Posterior cingulate gyrus (tissue), 11 donors: ENCODE measurements at regions of chr17 and their contacts with region 1.

Region 1: DNA sequence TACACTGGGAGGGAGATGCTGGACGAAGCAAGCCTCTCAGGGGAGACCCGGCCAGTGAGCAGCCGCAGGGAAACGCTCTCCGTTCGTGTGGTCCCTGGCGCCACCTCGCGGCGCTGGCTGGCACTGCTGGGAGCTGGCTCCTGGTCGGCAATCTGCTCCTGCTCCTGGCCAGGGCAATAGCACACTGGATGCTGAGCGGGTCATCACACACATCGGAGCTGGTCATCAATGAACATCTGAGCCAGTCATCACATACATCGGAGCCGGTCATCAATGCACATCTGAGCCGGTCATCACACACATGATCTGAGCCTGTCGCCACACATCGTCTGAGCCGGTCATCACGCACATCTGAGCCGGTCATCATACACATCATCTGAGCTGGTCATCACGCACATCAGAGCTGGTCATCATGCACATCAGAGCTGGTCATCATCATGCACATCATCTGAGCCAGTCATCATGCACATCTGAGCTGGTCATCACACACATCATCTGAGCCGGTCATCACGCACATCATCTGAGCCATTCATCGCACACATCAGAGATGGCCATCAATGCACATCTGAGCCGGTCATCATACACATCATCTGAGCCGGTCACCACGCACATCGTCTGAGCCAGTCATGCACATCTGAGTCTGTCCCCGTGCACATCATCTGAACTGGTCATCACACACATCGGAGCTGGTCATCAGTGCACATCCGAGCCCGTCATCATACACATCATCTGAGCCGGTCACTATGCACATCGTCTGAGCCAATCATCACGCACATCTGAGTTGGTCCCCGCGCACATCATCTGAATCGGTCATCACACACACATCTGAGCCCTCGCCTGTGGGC is 217.3 kb downstream of the RBFOX3 start:
- DNase-seq: peak; percentile 66 to 98 (median 88)

Region 2: DNA sequence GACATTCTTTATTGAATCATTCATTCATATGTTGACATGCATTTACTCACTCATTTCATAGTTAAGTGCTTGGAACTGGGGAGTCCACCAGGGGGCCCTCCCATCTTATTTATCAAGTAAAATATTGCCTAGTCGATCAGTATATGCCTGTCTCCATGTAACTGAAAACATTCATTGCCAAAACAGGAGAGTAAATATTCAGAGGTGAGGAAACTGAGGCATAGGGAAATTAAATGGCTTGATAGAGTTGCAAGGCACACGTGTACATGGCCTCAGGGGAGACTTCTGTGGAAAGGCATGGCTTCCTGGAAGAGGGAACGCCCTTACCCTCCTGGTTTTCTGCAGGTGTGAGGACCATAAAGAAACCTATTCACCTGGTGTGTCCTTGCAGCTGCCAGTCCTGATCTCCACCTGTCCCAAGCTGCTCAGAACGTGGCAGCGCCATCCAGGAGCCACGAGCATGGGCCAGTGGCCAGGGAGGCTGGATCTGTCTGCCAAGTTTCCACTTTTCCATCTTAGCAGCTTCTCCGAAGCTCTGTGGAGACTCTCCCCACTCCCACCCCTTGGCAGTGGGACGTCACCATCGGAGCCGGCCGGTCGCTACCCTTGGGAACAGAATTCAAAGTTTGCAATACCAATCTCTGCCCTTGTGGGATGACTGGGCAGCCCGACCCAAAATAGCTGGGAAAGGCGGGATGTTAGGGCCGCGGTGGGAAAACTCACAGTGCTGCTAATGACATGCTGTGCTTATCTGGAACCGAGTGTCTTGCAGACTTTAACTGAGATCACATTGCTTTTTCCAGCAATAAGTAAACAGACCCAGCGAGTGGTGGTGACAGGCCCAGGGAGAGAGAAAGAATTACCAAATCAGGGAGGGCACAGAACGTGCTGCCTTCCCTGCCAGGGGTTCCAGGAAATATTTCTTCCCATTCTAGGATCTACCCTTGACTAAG is 373.7 kb before region 1 on chr17:
- intact Hi-C with region 1: loop called (anchors 5 kb)
- DNase-seq: peak in 5 of 10 donors; percentile 35 to 87 (median 56)

Region 3: DNA sequence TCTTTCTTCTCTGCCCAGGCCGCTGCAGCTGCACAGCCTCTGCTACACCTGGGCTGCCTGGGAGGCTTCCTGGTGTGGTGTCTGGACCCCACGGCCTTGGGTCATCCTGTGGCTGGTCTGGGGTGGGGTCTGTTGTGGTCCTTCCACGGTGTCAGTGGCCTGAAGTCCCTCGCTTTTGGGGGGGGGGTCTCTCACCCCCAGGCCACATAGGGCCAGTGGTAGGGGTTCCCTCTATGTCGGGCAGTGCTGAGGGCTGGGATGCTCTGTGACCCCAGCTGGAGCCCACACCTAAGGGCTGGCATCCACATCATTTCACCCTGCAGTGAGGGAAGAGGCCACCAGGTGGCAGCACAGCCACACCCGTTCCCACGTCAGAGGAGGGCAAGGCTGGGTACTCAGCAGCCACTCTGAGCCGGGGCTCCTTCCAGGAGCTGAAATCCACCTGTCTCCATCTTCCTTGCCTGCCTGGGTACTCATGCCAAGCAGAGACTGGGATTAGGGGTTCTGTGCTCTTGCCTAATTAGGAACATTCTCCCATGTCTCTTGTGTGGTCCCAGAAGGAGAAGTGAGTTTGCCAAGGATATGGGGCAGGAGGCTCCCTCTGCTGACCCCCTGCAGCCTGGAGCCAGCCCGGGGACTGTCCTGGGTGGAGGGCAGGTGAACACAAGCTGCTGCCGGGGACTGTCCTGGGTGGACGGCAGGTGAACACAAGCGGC is 306.0 kb before region 1 on chr17:
- intact Hi-C with region 1: loop called (anchors 1 kb)
- DNase-seq: peak; percentile 58 to 96 (median 80)

Region 4: GRCh38 chr17:79188048-79188447 is 205.5 kb before region 1 on chr17:
- intact Hi-C with region 1: loop called (anchors 1 kb)
- DNase-seq: peak in 9 of 10 donors; percentile 28 to 93 (median 57)

Region 5: DNA sequence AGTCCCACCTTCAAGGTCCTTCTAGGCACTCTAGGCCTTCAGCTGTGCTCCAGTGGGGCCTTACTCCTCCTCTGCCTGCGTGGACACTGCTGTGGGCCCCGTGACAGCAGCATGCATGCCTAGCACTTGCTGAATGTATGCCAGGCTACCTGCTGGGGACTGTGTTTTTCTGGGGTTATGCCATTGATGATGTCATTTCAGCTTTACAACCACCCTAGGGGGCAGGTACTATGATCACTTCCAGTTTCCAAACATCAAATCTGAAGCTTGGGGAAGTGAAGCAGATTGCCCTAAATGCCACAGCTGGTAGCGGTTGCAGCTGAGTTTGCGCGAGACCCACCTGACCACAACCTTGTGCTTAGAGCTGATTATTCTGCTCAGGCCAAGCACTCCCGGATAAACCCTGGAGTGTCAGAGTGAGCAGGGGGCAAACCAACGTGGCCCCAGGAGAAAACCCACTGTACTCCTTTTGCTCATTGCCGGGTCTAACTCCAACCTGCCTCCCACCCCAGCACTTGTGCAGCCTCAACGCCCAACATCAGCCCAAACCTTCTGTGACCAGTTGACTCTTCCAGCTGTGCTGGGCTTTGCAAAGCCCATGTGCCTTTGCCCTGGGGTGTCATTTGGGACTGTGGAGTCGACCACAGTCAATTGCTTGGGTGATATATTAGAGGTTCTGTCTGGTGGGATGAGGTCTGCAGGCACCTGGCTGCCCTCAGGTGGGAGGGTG is 150.5 kb before region 1 on chr17:
- intact Hi-C with region 1: no loop called
- DNase-seq: no peak

Region 6: DNA sequence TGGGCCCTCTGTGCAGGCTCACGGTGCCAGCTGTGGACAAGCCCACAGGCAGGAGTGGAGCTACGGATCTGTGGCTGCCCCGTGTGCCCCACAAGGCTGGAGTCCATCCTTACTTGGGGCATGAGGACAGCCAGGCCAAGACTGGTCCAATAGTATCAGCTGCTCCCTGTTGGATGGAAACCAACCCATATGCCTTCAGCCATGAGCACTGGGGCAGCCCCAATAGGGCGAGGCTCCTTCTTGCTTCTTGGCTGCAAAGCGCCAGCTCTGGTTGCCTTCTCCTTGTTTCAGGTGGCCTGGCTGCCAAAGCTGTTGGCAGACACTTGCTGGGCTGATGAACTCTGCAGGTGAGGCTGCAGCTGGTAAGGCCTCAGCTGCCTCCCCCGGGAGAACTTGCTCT is 131.0 kb before region 1 on chr17:
- intact Hi-C with region 1: no loop called
- DNase-seq: no peak

Region 7: DNA sequence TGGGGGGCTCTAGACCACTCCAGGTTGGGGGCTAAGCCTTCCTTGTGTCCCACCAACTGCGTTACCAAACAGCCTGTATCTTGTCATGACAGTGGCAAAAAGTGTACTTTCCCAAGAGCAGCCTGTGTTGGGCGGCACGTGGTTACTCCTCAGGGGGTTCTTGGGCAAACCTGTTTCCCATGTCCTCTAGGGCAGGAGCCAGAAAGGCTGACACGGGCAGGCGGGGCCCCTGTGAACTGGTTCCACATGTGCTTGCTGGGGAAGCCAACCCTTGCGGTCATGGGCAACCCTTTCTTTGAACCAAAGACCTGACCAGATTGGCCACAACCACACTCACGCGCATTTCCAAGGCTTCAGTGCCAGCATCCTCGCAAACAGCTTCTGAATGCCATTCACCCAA is 11.3 kb before region 1 on chr17:
- intact Hi-C with region 1: no loop called
- DNase-seq: no peak

Region 8: GRCh38 chr17:79581324-79581932 is 187.8 kb after region 1 on chr17:
- intact Hi-C with region 1: no loop called
- DNase-seq: peak in 2 of 10 donors; percentile 50 to 71